Vagina (tissue), 2 donors: ENCODE measurements at regions of chr9 and their contacts with region 1.

Region 1: DNA sequence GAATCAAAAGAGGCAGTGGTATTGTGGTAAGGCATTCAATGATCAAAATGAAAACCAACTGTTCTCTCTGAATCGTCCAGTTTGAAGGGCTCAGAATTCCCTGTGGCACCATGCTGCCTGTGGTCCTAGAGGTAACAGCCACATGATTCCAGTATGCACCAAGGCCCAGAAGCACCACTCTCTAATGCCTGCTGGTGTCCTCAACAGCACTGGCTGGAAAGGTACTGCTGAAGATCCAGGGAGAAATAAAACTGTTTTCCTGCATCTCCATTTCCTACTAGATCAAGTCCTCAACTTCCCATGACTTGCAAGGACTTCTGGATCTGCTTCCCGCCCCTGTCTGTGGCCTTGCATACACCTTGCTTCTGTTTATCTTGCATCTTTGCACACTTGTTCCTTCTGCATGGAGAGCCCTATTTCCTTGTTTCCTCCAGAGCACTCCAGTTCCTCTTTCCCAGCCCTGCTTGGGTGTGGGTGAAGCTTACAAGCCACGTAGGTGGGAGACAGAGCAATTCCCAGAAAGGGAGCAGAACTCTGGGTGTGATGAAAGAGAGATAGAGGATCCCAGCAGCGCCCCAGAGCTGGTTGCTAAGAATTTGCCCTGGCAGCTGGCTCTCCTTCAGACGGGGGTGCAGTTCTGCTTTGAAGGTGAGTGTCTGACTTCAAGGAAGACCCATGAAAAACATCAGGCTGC is 41.0 kb upstream of the EQTN start:
- DNase-seq: no peak
- H3K4me3 ChIP-seq: no peak overlapping the region
- H3K27ac ChIP-seq: peak overlapping the region; percentile 73
- H3K4me1 ChIP-seq: peaks cover 57% of the 10 kb centered on the region
- H3K27me3 ChIP-seq: no peaks in the 10 kb centered on the region
- CTCF ChIP-seq: no peak
- POLR2A ChIP-seq: no peak

Region 2: DNA sequence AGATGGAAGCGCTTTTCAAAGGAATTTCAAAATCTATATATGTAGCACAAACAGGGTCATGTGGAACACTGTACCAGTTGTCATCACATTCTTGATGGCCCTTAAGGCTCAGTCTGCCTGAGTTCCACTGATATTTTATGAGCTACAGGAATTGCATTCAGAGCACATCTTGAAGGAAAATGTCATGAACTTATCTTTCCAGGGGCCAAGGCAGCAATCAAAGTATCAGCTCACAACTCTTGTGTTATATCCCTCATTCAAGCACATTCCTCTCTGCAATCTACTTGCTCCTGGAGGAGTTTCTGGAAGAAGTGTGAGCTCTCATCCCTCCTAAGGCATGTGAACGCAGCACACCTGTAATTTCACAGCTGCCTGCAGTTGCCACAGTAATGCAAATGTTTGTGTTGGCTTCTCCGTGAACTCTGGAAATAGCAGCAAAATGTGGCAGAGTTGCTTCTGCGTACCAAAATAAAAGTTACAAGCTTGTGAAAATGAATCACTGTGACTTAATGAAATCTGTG is 48.7 kb after region 1 on chr9:
- intact Hi-C with region 1: no loop called
- DNase-seq: no peak
- H3K4me3 ChIP-seq: no peak overlapping the region
- H3K27ac ChIP-seq: no peak overlapping the region
- H3K4me1 ChIP-seq: peaks cover 42% of the 10 kb centered on the region
- H3K27me3 ChIP-seq: no peaks in the 10 kb centered on the region
- CTCF ChIP-seq: no peak
- POLR2A ChIP-seq: no peak

Region 3: DNA sequence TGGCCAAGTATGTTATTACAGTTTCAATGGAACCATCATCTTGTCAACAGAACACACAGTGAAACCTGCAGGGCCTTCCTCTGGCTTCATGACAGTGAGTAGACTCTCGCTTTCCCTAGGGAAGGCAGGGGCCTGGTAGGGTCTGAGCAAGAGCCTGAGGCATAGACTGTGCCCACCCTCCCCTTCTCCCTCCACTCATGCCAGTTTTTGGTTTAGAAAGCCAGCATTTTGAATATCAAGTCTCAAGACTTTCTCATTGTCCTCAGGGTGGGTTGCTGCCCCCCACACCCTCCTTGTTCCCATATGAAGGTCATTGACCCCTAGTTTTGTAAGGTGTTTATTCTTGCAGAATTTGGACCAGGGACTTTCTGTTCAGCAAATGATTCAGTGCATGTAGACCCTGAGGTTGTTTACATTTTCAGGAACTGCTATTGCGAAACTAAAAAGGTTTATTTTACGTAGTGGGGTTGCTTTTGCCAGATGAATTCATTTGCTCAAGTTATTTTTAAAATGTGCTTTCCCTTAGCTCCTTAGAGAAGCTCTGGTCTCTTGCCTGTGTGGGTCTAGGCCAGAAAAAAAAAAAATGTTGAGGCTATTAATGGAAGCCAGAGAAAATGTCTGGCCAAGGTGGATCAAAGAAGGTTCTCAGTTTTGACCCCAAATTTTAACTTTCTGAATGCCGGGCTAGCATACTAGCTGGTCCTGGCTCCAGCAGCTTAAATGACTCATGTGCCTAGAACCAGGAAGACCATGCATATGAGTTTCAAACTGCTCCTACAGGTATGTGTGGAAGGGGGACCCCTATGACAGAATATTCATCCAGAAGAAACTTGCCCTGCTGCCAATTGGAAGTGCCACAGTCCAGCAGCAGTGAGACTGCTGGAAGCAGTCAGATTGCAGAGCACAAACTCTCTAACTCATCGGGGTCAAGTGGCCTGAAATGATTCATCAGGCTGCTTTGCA is 201.8 kb after region 1 on chr9:
- intact Hi-C with region 1: loop called (anchors 5 kb)
- DNase-seq: no peak
- H3K4me3 ChIP-seq: no peak overlapping the region
- H3K27ac ChIP-seq: peak overlapping the region; percentile 73
- H3K4me1 ChIP-seq: peaks cover 37% of the 10 kb centered on the region
- H3K27me3 ChIP-seq: no peaks in the 10 kb centered on the region
- CTCF ChIP-seq: no peak
- POLR2A ChIP-seq: no peak